ENCODE measurements at regions of chr11 and their contacts with region 1.

Region 1: DNA sequence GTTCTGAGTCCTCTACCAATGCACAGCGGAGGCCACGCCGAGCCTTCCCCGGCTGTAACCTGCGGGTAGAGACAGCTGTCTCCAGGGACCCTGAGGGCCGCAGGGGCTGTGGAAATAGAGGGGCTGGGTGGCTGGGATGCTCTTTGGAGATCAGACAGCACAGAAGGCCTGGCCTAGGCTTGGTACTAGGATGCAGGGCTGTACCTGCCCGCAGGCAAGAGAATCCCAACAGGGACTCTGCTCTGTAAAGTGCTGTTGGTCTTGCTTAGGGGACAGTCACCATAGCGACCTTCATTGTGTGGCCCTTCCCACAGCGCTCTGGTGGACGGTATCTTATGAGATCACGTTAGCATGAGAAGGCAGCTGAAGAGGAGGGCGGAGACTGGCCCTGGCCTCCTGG is 11.3 kb upstream of the KCNJ5 start:
- H3K4me3 ChIP-seq: no peak overlapping the region
- H3K27ac ChIP-seq: no peak overlapping the region
- H3K4me1 ChIP-seq: no peaks in the 10 kb centered on the region
- CTCF ChIP-seq: no peak

Region 2: DNA sequence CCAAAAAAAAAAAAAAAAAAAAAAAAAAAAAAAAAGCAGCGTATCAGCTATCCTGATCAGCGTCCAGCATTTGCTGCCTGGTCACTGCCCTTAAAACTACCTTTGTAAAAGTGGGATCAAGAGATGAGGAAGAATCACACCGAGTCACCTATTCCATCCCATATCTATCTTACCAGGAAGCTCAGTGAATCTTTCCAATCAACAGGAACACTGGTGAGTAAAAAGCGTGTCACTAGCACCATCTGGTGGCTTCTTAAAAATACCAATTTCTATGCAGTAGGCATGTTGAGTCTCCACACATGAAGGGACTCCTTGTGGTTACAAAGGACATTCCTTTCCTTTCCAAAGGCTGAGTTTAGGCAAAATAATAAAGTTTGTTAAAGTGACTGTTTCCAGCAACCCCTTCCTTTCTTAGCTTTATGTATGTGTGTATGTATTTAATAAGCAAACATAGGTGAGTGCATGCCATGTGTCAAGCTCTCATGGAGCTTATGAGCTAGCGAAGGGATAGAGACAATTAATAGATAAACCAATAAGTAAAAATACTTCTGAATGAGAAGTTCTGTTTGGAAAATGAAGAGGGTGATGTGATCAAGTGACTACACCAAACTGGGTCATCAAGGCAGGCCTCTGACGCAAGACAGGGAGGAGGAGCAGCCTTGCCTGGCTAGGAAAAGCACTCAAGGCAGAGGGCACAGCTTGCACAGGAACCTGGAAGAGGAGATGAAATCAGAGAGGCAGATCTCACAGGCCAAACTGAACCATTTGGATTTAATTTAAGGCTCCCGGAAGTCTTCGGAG is 76.8 kb after region 1 on chr11:
- CTCF ChIA-PET with region 1: interaction called, 556 read pairs
- POLR2A ChIA-PET with region 1: interaction called, 14 read pairs
- H3K4me3 ChIP-seq: no peak overlapping the region
- H3K27ac ChIP-seq: no peak overlapping the region
- H3K4me1 ChIP-seq: no peaks in the 10 kb centered on the region
- CTCF ChIP-seq: peak; percentile 52; the same call in 1 of the 2 replicates